Caco-2 (cell line): ENCODE measurements at regions of chrX and their contacts with region 1.

Region 1: GRCh38 chrX:48737213-48737938 is 24.2 kb upstream of the GLOD5 start:
- DNase-seq: peak; percentile 91 to 96
- H3K4me3 ChIP-seq: peak overlapping the region; percentile 56
- H3K4me3 Mint-ChIP-seq: peak overlapping the region; percentile 77
- H3K27ac Mint-ChIP-seq: peak overlapping the region; percentile 72
- H3K4me1 ChIP-seq: no peaks in the 10 kb centered on the region; the same call in 1 of the 2 replicates
- H3K4me1 Mint-ChIP-seq: peaks cover 6% of the 10 kb centered on the region
- H3K27me3 ChIP-seq: no peaks in the 10 kb centered on the region
- H3K27me3 Mint-ChIP-seq: no peaks in the 10 kb centered on the region
- CTCF ChIP-seq: no peak

Region 2: DNA sequence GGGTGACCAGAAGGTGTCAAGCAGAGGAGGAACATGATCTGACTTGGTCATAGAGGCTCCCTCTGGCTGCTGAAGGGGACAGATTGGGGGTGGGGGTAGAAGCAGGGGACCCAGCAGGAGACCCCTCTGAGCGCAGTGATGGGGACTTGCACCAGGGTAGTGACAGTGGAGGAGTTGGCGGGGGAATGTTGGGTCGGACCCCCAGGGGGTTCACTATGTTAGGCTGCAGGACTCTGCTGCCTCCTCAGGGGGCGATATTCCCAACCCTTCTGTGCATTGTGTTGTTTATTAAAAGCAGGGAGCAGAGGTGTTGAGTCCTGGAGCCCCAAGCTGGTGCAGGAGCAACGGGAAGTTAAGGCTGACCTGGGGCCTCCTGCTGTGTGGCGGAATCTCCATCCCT is 131.3 kb before region 1 on chrX:
- CTCF ChIA-PET with region 1: no interaction called
- POLR2A ChIA-PET with region 1: no interaction called
- intact Hi-C with region 1: no loop called
- DNase-seq: no peak
- H3K4me3 ChIP-seq: no peak overlapping the region
- H3K4me3 Mint-ChIP-seq: no peak overlapping the region
- H3K27ac Mint-ChIP-seq: no peak overlapping the region
- H3K4me1 ChIP-seq: no peaks in the 10 kb centered on the region
- H3K4me1 Mint-ChIP-seq: no peaks in the 10 kb centered on the region
- H3K27me3 ChIP-seq: no peaks in the 10 kb centered on the region
- H3K27me3 Mint-ChIP-seq: no peaks in the 10 kb centered on the region
- CTCF ChIP-seq: no peak

Region 3: GRCh38 chrX:48696301-48697181 is 40.8 kb before region 1 on chrX and contains the start of gene SUV39H1:
- CTCF ChIA-PET with region 1: no interaction called
- POLR2A ChIA-PET with region 1: interaction called, 10 read pairs
- intact Hi-C with region 1: loop called (anchors 2 kb)
- DNase-seq: peak; percentile 85 to 89
- H3K4me3 ChIP-seq: peak within 1 kb of the TSS; percentile 69
- H3K4me3 Mint-ChIP-seq: peak within 1 kb of the TSS; percentile 85
- H3K27ac Mint-ChIP-seq: peak within 1 kb of the TSS; percentile 79
- H3K4me1 ChIP-seq: no peaks in the 10 kb centered on the region
- H3K4me1 Mint-ChIP-seq: peaks cover 7% of the 10 kb centered on the region
- H3K27me3 ChIP-seq: no peaks in the 10 kb centered on the region
- H3K27me3 Mint-ChIP-seq: no peaks in the 10 kb centered on the region
- CTCF ChIP-seq: no peak
- total RNA-seq, gene SUV39H1: 13.9 and 15.8 TPM in 2 replicates

Region 4: GRCh38 chrX:48714573-48714972 is 22.8 kb before region 1 on chrX:
- CTCF ChIA-PET with region 1: no interaction called
- POLR2A ChIA-PET with region 1: interaction called, 10 read pairs
- intact Hi-C with region 1: no loop called
- DNase-seq: no peak
- H3K4me3 ChIP-seq: no peak overlapping the region
- H3K4me3 Mint-ChIP-seq: no peak overlapping the region
- H3K27ac Mint-ChIP-seq: no peak overlapping the region
- H3K4me1 ChIP-seq: peaks cover 19% of the 10 kb centered on the region
- H3K4me1 Mint-ChIP-seq: peaks cover 44% of the 10 kb centered on the region
- H3K27me3 ChIP-seq: no peaks in the 10 kb centered on the region
- H3K27me3 Mint-ChIP-seq: no peaks in the 10 kb centered on the region
- CTCF ChIP-seq: no peak

Region 5: DNA sequence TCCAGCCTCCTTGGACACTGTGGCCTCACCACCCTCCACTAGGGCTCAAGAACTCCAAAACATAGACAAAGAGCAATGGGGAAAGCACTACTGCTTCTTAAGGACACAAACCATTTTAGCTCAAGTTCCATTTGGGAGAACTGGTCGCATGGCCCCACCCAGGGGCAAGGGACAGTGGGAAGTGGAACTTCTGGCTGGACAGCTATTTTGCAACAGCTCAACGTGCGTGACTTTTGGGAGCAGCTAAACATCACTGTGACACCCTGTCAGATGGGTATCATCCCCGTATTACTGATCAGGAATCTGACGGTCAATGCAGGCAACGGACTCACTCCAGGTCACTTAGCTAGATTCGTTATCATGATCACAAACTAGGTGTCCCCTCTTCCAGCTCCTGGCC is 15.1 kb after region 1 on chrX:
- CTCF ChIA-PET with region 1: no interaction called
- POLR2A ChIA-PET with region 1: interaction called, 16 read pairs
- intact Hi-C with region 1: loop called (anchors 2 kb)
- DNase-seq: peak in 1 of 2 experiments; percentile 32
- H3K4me3 ChIP-seq: no peak overlapping the region
- H3K4me3 Mint-ChIP-seq: no peak overlapping the region
- H3K27ac Mint-ChIP-seq: no peak overlapping the region
- H3K4me1 ChIP-seq: peaks cover 22% of the 10 kb centered on the region
- H3K4me1 Mint-ChIP-seq: peaks cover 14% of the 10 kb centered on the region
- H3K27me3 ChIP-seq: no peaks in the 10 kb centered on the region
- H3K27me3 Mint-ChIP-seq: no peaks in the 10 kb centered on the region
- CTCF ChIP-seq: no peak